H1 (cell line): ENCODE measurements at regions of chr11 and their contacts with region 1.

Region 1: DNA sequence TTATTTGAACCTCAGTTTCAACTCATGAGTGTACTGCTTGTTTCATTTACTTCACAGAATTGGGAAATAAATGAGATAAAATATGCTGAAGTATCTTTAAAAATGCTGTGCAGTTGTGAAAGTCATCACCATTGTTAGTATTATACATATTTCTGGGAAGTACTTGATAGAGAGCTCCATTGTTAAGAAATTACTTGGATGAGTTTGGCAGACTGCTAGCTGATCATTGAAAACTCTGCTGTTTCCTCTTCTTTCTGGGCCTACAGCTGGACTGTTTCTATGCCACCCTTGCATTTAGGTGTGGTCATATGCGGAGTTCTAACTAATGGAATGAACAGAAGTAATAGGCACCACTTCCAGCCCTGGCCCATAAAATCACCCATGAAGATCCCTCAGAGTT is 10.0 kb downstream of the SIK2 start:
- DNase-seq: no peak
- H3K4me3 ChIP-seq: no peak overlapping the region
- H3K27ac ChIP-seq: no peak overlapping the region
- H3K4me1 ChIP-seq: no peaks in the 10 kb centered on the region
- H3K27me3 ChIP-seq: peaks cover 0 to 1% (median 0%) of the 10 kb centered on the region in 4 experiments; a peak in 1 of 7 replicates
- CTCF ChIP-seq: no peak
- EP300 ChIP-seq: no peak
- POLR2A ChIP-seq: no peak
- RAD21 ChIP-seq: no peak

Region 2: GRCh38 chr11:111586388-111586831 is 25.8 kb before region 1 on chr11:
- CTCF ChIA-PET with region 1: no interaction called
- POLR2A ChIA-PET with region 1: no interaction called
- DNase-seq: no peak
- H3K4me3 ChIP-seq: no peak overlapping the region
- H3K27ac ChIP-seq: no peak overlapping the region
- H3K4me1 ChIP-seq: peaks cover 0 to 5% (median 0%) of the 10 kb centered on the region in 4 experiments; a peak in 1 of 7 replicates
- H3K27me3 ChIP-seq: no peaks in the 10 kb centered on the region
- CTCF ChIP-seq: peak in 2 of 3 experiments; percentile 37 to 70; a peak in 2 of 4 replicates
- EP300 ChIP-seq: no peak
- POLR2A ChIP-seq: no peak
- RAD21 ChIP-seq: peak; percentile 76 to 78

Region 3: GRCh38 chr11:111601979-111602864 is 10.0 kb before region 1 on chr11 and contains the start of gene SIK2:
- CTCF ChIA-PET with region 1: interaction called, 12 read pairs
- POLR2A ChIA-PET with region 1: no interaction called
- DNase-seq: peak; percentile 92
- H3K4me3 ChIP-seq: peak within 1 kb of the TSS; percentile 62 to 96 (median 77)
- H3K27ac ChIP-seq: peak within 1 kb of the TSS; percentile 45; the same call in 1 of the 2 replicates
- H3K4me1 ChIP-seq: peaks cover 0 to 10% (median 3%) of the 10 kb centered on the region in 4 experiments; a peak in 2 of 7 replicates
- H3K27me3 ChIP-seq: peaks cover 0 to 18% (median 12%) of the 10 kb centered on the region in 4 experiments; a peak in 5 of 7 replicates
- CTCF ChIP-seq: peak; percentile 93 to 97 (median 96)
- EP300 ChIP-seq: peak in 1 of 2 experiments; percentile 39; a peak in 1 of 3 replicates
- POLR2A ChIP-seq: 0 out of 3 replicates have a peak, but pooled peaks of 1 of the 2 experiments have one; percentile 53
- RAD21 ChIP-seq: peak; percentile 99
- total RNA-seq, gene SIK2: 8.8 and 12.7 TPM in 2 replicates